ENCODE measurements at regions of chr17 and their contacts with region 1.

Region 1: DNA sequence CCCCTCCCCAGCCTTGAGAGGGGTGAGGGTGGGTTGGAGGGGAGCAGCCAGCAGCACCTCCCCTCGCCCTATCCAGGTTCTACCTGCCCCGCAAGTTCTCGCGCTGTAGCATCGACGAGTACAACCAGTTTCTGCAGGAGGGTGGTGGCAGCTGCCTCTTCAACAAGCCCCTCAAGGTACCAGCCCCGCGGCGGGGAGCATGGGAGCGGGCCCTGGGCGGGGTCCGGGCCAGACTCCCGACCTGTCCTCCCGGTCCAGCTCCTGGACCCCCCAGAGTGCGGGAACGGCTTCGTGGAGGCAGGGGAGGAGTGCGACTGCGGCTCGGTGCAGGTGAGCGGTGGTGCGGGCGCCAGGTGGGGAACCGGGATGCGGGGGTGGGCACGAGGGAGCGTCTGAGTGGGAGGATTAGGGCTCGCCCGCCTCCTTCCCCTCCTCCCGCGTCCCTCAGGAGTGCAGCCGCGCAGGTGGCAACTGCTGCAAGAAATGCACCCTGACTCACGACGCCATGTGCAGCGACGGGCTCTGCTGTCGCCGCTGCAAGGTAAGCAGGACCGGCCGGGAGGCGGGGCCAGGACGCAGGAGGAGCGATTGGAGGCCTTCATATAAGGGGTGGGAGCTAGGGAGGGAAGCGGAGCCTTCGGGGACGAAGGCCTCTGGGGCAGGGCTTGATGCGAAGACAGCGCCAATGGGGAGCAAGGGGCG is 16.5 kb downstream of the ADAM11 start:
- DNase-seq: peak; percentile 99
- H3K4me3 Mint-ChIP-seq: peak overlapping the region; percentile 88
- H3K27ac Mint-ChIP-seq: peak overlapping the region; percentile 81
- H3K4me1 Mint-ChIP-seq: peaks cover 14% of the 10 kb centered on the region
- H3K27me3 Mint-ChIP-seq: peaks cover 8% of the 10 kb centered on the region

Region 2: GRCh38 chr17:44533533-44534246 is 241.6 kb before region 1 on chr17:
- intact Hi-C with region 1: loop called (anchors 10 kb)
- DNase-seq: peak; percentile 95
- H3K4me3 Mint-ChIP-seq: peak overlapping the region; percentile 27
- H3K27ac Mint-ChIP-seq: peak overlapping the region; percentile 0
- H3K4me1 Mint-ChIP-seq: peaks cover 7% of the 10 kb centered on the region
- H3K27me3 Mint-ChIP-seq: no peaks in the 10 kb centered on the region

Region 3: DNA sequence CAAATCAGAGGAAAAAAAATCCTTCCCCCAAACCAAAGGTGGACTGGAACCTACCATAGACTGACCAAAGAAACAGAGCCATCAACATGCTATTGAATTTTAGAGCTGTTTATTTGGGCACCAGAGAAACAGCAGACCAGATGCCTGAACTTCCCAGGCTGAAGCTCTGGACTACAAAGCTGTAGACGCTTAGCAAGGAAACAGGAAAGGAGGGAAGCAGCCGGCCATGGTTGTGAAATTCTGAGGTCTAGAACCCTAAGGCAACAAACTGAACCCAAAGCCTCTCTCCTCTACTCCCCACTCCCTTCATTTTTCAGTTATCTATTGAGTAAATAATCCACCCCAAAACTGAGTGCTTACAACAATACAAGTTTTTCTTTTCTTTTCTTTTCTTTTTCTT is 164.4 kb before region 1 on chr17:
- intact Hi-C with region 1: no loop called
- DNase-seq: no peak
- H3K4me3 Mint-ChIP-seq: no peak overlapping the region
- H3K27ac Mint-ChIP-seq: no peak overlapping the region
- H3K4me1 Mint-ChIP-seq: no peaks in the 10 kb centered on the region
- H3K27me3 Mint-ChIP-seq: peaks cover 3% of the 10 kb centered on the region

Region 4: DNA sequence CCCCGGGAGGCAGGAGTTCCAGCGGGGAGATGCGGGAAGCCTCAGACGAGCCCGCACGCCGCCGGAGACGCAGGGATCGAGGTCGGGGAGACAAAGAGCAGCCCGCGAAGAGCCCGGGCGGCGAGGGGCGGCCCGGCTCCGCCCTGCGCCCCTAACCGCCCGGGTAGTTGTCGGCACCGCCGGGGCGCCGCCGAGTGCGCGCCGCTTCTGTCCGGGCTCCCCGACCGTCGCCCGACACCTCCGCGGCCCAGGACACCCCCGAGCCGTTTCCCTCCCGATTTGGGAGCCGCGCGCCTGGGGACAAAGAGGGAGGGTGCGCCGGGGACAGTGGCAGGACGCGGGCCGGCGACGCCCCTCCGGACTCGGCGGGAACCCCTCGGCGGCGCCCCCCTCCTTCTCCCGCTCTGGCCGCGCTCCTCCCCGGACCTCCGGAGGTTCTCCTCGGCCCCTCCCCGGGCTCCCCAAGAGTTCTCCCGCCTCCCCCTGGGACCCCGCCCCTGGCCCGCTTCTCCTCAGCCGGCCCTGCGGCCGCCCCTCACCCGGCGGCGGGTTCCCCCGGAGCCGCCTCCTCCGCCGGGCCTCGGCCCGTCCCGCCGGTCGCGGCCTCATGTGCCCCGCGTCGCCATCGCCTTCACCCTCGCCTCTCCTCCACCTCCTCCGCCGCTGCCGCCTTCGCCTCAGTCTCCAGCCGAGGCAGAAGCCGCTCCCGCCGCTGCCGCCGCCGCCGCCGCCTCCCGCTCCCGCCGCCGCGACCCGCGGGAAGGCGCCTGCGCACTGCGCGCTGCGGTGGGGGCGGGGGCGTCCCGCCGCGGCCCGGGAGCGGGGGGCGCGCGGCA is 54.5 kb after region 1 on chr17 and contains the start of gene GJC1:
- intact Hi-C with region 1: loop called (anchors 1 kb)
- DNase-seq: peak; percentile 74
- H3K4me3 Mint-ChIP-seq: peak within 1 kb of the TSS; percentile 79
- H3K27ac Mint-ChIP-seq: peak within 1 kb of the TSS; percentile 65
- H3K4me1 Mint-ChIP-seq: peaks cover 10% of the 10 kb centered on the region
- H3K27me3 Mint-ChIP-seq: peaks cover 62% of the 10 kb centered on the region
- total RNA-seq, gene GJC1: 6.1 and 7.5 TPM in 2 replicates

Region 5: GRCh38 chr17:44864866-44865660 is 89.8 kb after region 1 on chr17:
- intact Hi-C with region 1: loop called (anchors 1 kb)
- DNase-seq: peak; percentile 91
- H3K4me3 Mint-ChIP-seq: no peak overlapping the region
- H3K27ac Mint-ChIP-seq: no peak overlapping the region
- H3K4me1 Mint-ChIP-seq: no peaks in the 10 kb centered on the region
- H3K27me3 Mint-ChIP-seq: no peaks in the 10 kb centered on the region

Region 6: GRCh38 chr17:45021607-45022287 is 246.5 kb after region 1 on chr17:
- intact Hi-C with region 1: loop called (anchors 2 kb)
- DNase-seq: peak; percentile 92
- H3K4me3 Mint-ChIP-seq: peak overlapping the region; percentile 53
- H3K27ac Mint-ChIP-seq: no peak overlapping the region
- H3K4me1 Mint-ChIP-seq: peaks cover 18% of the 10 kb centered on the region
- H3K27me3 Mint-ChIP-seq: peaks cover 33% of the 10 kb centered on the region

Measured in activated CD4-positive, alpha-beta T cell treated with anti-CD3 and anti-CD28 coated beads, Interleukin-2, amount 10 ng/mL, durations not matched to agents 24 days and 14 days (primary cell).